Cardiac septum (tissue), 1 donor: ENCODE measurements at regions of chr1 and their contacts with region 1.

Region 1: GRCh38 chr1:181142096-181142958 is 53.8 kb downstream of the IER5 start:
- DNase-seq: peak; percentile 95

Region 2: DNA sequence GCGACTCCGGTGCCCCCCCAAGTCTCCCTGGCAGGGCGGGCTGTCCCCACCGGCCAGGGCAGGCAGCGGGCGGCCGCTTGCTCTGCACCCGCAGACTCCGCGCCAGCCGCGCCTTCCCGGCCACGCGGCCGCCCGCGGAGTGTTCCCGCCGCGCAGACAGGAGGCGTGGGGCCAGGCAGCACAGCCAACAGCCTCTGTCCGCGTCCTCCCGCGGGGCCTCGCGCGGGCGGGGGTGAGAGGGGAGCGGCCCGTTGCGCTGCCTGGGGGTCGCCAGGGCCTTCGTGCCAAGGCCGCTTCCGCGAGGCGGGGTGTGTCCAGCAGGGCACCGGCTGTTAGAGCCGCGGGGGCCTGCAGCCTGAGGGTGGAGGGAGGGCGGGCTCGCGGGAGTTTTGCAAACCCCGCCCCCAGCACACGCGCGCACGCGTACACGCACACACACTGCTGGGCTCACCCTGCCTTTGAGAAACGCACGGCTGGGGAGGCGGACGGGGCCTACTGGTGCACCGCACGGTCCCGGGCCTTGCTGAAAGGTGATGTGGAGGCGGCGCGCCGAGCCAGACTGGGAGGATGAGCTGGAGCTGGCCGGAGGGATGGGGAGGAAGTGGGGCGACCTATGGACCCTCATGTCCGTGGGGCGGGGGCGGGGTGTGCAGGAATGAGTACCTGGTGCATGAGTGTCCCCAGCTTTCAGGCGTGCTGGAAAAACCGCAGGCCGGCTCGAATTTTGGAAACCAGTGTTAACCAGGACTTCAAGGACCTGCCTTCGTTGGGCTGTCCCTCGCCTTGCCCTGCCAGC is 188.1 kb before region 1 on chr1:
- intact Hi-C with region 1: loop called (anchors 5 kb)
- DNase-seq: peak; percentile 84

Region 3: DNA sequence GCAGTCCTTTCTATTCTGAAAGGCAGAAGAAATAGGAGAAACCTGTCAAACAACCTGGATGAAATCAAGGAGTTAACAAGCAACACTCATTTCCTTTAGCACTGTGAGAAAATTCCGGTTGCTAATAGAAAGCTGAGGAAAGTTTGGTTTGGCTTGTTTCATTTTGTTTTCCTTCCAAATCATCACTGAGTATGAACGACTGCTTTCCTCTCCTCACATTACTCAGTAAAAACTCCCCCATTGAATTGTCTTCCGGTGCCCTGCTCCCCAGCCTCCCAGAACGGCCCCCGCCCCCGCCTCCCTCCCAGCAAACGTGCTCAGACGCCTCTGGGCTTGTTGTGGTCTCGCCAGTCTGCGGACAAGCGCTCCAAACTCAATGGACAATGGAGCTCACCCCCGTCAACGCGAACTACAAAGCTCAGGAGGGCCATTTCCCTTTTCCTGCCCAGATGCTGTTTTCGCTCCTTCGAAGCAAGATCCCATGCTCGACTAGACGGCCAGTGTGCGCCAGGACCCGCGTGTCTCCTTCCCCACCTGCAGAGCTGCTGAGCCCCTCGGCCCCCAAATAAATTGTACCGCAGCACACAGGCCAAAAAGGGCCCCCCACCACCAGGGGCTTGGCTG is 120.4 kb before region 1 on chr1:
- intact Hi-C with region 1: loop called (anchors 5 kb)
- DNase-seq: peak; percentile 85

Region 4: GRCh38 chr1:181033799-181034451 is 108.4 kb before region 1 on chr1 and contains the start of gene MR1:
- intact Hi-C with region 1: loop called (anchors 2 kb)
- DNase-seq: no peak
- total RNA-seq, gene MR1: 4.6 TPM

Region 5: GRCh38 chr1:181105134-181106021 is 36.9 kb before region 1 on chr1:
- intact Hi-C with region 1: loop called (anchors 1 kb)
- DNase-seq: peak; percentile 98

Region 6: DNA sequence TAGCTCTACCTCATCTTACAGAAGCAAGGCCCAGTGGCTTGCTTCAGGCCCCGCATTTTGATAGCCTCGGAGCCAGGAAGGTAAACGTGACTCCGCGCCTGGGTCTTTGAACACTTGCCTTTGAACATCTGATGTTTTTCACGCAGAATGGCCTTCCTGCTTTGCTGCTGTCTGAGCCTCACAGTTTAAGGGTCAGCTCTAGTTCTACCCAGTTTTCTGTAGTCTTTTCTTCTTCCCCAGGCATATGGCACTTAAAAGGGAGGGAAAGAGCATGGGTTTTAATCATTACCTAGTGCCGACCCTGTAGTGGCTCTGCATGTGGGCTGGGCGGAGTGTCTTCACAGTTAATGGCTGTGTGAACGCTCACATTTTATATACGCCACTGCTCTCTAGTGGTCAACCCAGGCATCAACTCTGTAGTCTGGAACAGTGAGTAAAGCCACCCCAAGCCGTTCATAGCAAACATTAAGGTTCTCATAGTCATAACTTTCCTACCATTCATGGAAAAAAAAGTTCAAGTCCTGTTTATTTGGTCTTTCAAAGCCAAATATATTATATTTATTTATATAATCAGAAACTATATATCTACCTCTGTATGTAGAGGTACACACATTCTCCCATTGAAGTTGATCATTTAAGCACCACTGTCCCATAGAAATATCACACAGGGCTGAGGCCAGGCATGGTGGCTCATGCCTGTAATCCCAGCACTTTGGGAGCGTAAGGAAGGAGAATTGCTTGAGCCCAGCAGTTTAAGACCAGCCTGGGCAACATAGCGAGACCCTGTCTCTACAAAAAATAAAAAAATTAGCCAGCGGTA is 24.3 kb after region 1 on chr1:
- intact Hi-C with region 1: loop called (anchors 2 kb)
- DNase-seq: no peak